Natural killer cell (primary cell): ENCODE measurements at regions of chr13 and their contacts with region 1.

Region 1: GRCh38 chr13:30408319-30409101 is 13.8 kb upstream of the UBE2L5 start:
- DNase-seq: peak; percentile 78 to 94
- ATAC-seq: peak; percentile 80 to 94 (median 91)
- H3K4me3 ChIP-seq: peak overlapping the region; percentile 29
- H3K4me3 Mint-ChIP-seq: peak overlapping the region; percentile 86
- H3K27ac ChIP-seq: peak overlapping the region; percentile 66
- H3K27ac Mint-ChIP-seq: peak overlapping the region; percentile 81
- H3K4me1 ChIP-seq: peaks cover 25% of the 10 kb centered on the region
- H3K4me1 Mint-ChIP-seq: peaks cover 26 to 31% of the 10 kb centered on the region in 2 donors
- H3K27me3 ChIP-seq: no peaks in the 10 kb centered on the region
- H3K27me3 Mint-ChIP-seq: no peaks in the 10 kb centered on the region
- CTCF ChIP-seq: peak; percentile 57

Region 2: DNA sequence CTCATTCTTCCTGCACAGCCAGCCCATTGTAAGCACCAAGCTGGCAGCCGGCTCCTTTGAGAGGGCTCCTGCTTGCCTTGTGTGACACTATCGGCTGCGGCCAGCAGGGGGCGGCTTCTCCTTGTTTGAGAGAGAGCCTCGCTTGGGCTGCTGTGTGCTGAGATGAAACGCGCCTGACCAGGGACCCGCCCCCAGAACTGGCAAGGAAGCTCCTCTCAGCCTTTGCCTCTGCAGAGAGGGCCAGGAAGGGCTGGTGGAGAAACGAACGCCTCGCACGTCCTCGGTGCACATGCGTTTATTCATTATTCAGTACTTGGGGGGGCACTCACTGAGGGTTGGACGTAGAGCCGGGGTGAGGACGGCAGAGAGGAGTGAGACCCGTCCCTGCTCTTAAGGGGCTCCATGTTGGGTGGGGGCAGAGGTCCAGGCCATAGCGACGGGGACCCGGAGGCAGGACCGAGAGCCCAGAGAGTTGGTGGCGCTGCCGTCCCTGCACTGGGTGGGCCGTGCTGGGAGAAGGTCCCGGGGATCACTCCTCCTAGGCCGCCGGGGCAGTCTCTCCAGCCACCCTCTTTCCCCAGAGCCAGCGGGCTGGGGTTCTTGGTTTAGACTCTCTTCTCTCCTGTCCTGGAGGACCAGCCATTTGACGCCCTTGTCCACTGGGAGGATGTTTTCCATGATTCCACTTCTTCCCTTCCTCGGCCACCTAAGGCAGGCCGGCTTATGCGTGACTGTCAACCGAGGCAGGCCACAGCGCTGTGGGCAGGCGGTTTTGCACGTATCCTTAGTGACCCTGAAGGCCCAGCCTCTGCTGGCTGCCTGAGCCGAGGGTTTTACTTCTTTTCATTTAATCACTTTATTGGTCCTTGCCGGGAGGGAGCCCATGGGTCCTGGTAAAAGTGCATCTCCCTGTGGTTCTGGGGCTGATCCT is 275.6 kb before region 1 on chr13:
- intact Hi-C with region 1: no loop called
- DNase-seq: peak; percentile 95 to 96
- ATAC-seq: peak; percentile 97 to 100 (median 100)
- H3K4me3 ChIP-seq: no peak overlapping the region
- H3K4me3 Mint-ChIP-seq: peak overlapping the region; percentile 78
- H3K27ac ChIP-seq: no peak overlapping the region
- H3K27ac Mint-ChIP-seq: peak overlapping the region; percentile 29 to 78
- H3K4me1 ChIP-seq: peaks cover 12% of the 10 kb centered on the region
- H3K4me1 Mint-ChIP-seq: peaks cover 20 to 23% of the 10 kb centered on the region in 2 donors
- H3K27me3 ChIP-seq: no peaks in the 10 kb centered on the region
- H3K27me3 Mint-ChIP-seq: no peaks in the 10 kb centered on the region
- CTCF ChIP-seq: peak; percentile 95

Region 3: GRCh38 chr13:30306762-30307193 is 101.7 kb before region 1 on chr13:
- intact Hi-C with region 1: loop called (anchors 2 kb)
- DNase-seq: peak; percentile 82 to 95
- ATAC-seq: peak; percentile 88 to 96 (median 94)
- H3K4me3 ChIP-seq: peak overlapping the region; percentile 83
- H3K4me3 Mint-ChIP-seq: peak overlapping the region; percentile 88
- H3K27ac ChIP-seq: peak overlapping the region; percentile 79
- H3K27ac Mint-ChIP-seq: peak overlapping the region; percentile 42 to 89
- H3K4me1 ChIP-seq: peaks cover 12% of the 10 kb centered on the region
- H3K4me1 Mint-ChIP-seq: peaks cover 4 to 18% of the 10 kb centered on the region in 2 donors
- H3K27me3 ChIP-seq: no peaks in the 10 kb centered on the region
- H3K27me3 Mint-ChIP-seq: no peaks in the 10 kb centered on the region
- CTCF ChIP-seq: no peak

Region 4: GRCh38 chr13:30395192-30396084 is 13.1 kb before region 1 on chr13:
- intact Hi-C with region 1: loop called (anchors 1 kb)
- DNase-seq: peak; percentile 62 to 87
- ATAC-seq: peak; percentile 66 to 79 (median 69)
- H3K4me3 ChIP-seq: peak overlapping the region; percentile 67
- H3K4me3 Mint-ChIP-seq: peak overlapping the region; percentile 99
- H3K27ac ChIP-seq: peak overlapping the region; percentile 92
- H3K27ac Mint-ChIP-seq: peak overlapping the region; percentile 88 to 91
- H3K4me1 ChIP-seq: peaks cover 12% of the 10 kb centered on the region
- H3K4me1 Mint-ChIP-seq: peaks cover 17 to 20% of the 10 kb centered on the region in 2 donors
- H3K27me3 ChIP-seq: no peaks in the 10 kb centered on the region
- H3K27me3 Mint-ChIP-seq: no peaks in the 10 kb centered on the region
- CTCF ChIP-seq: no peak

Region 5: DNA sequence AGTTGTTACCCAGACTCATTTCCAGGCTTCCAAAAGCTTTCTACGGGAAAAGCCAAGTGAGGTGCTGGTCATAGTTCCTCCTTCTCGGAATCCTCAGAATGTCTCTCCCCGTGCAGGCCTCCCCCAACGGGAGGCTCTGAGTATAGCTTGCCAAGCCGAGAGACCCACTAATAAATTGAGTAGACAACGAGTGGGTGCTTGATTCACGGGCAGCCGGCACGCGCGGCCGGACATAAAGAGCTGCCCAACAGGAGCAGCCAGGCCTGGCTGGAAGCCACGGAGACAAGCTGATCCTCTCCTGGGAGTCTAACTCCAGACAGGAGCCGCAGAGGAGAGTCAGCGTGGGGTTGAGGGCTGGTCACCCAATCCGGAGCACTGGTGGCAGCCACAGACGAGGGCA is 454.2 kb after region 1 on chr13:
- intact Hi-C with region 1: no loop called
- DNase-seq: no peak
- ATAC-seq: no peak
- H3K4me3 ChIP-seq: no peak overlapping the region
- H3K4me3 Mint-ChIP-seq: no peak overlapping the region
- H3K27ac ChIP-seq: no peak overlapping the region
- H3K27ac Mint-ChIP-seq: no peak overlapping the region
- H3K4me1 ChIP-seq: no peaks in the 10 kb centered on the region
- H3K4me1 Mint-ChIP-seq: peaks cover 6% of the 10 kb centered on the region in 2 donors
- H3K27me3 ChIP-seq: peaks cover 2% of the 10 kb centered on the region
- H3K27me3 Mint-ChIP-seq: peaks cover 6 to 10% of the 10 kb centered on the region in 2 donors
- CTCF ChIP-seq: no peak